ENCODE measurements at regions of chr1 and their contacts with region 1.

Region 1: GRCh38 chr1:196774603-196775002 is at the start of gene CFHR3:
- DNase-seq: no peak
- H3K4me3 ChIP-seq: no peak within 1 kb of the TSS
- H3K27ac ChIP-seq: no peak within 1 kb of the TSS
- H3K4me1 ChIP-seq: no peaks in the 10 kb centered on the region
- H3K27me3 ChIP-seq: no peaks in the 10 kb centered on the region
- CTCF ChIP-seq: no peak
- total RNA-seq, gene CFHR3: not detected

Region 2: DNA sequence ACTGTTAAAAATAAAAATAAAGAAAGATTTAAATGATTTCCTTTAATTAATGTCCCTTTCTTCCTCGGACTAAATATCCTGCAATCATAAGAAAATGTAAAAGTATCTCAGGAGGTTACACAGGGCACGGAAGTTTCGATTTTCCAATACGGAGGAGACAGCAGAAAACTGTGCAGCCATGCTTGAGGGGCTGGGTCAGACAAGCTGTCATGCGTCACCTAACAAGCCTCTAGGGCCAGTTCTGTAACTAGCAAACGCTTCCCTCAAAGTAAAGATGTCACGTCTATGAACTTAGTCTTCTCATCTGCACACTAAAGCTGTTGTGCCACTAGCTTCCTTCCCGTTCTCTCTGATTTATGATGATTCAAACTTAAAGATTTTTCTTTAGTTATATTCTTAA is 78.8 kb after region 1 on chr1:
- intact Hi-C with region 1: loop called (anchors 10 kb)
- DNase-seq: no peak
- H3K4me3 ChIP-seq: no peak overlapping the region
- H3K27ac ChIP-seq: no peak overlapping the region
- H3K4me1 ChIP-seq: no peaks in the 10 kb centered on the region
- H3K27me3 ChIP-seq: no peaks in the 10 kb centered on the region
- CTCF ChIP-seq: no peak

Region 3: DNA sequence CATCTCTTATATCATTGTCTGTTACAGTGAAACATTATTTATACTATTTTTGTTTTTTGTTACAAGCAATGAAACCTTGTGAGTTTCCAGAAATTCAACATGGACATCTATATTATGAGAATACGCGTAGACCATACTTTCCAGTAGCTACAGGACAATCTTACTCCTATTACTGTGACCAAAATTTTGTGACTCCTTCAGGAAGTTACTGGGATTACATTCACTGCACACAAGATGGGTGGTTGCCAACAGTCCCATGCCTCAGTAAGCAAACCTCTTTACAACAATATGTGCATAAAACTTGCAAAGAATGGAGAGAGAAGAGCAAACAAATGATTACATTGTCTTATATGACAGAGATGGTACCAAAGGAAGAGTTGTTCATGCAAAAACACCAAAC is 135.6 kb after region 1 on chr1:
- intact Hi-C with region 1: no loop called
- DNase-seq: no peak
- H3K4me3 ChIP-seq: no peak overlapping the region
- H3K27ac ChIP-seq: no peak overlapping the region
- H3K4me1 ChIP-seq: no peaks in the 10 kb centered on the region
- H3K27me3 ChIP-seq: no peaks in the 10 kb centered on the region
- CTCF ChIP-seq: no peak

Measured in ascending aorta (tissue), 2 donors.